ENCODE measurements at regions of chr4 and their contacts with region 1.

Region 1: GRCh38 chr4:186725469-186726425 is 2.1 kb upstream of the FAT1 start:
- DNase-seq: peak; percentile 78 to 93
- ATAC-seq: peak; percentile 90
- H3K4me3 ChIP-seq: peak overlapping the region; percentile 38 to 90
- H3K27ac ChIP-seq: peak overlapping the region; percentile 54 to 97
- H3K4me1 ChIP-seq: no peaks in the 10 kb centered on the region
- H3K27me3 ChIP-seq: no peaks in the 10 kb centered on the region

Region 2: DNA sequence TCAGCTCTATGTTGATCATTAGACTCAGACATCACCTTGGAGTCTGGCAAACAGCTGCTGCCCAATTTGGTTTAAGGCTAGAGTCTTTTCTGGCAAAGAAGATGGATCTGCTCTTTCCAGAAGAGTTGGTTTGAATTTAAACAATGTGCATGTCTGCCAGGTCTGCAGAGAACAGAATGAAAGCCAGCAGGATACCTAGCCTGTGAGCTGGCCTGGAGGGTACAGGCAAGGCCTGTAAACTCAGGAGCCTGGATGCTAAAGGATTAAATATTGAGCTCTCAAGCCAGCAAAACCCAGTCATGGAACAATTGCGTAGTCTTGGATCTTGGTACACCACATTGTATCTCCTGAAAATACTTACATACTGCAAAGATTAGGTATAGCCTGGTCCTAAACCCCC is 1174.8 kb before region 1 on chr4:
- intact Hi-C with region 1: no loop called
- DNase-seq: no peak
- ATAC-seq: no peak
- H3K4me3 ChIP-seq: no peak overlapping the region
- H3K27ac ChIP-seq: peak overlapping the region in 1 of 2 donors; percentile 3
- H3K4me1 ChIP-seq: peaks cover 0 to 3% of the 10 kb centered on the region in 2 donors
- H3K27me3 ChIP-seq: no peaks in the 10 kb centered on the region

Region 3: GRCh38 chr4:186669159-186669731 is 56.5 kb before region 1 on chr4:
- intact Hi-C with region 1: loop called in 1 of 2 experiments (anchors 1 kb)
- DNase-seq: no peak
- ATAC-seq: peak; percentile 79
- H3K4me3 ChIP-seq: peak overlapping the region in 1 of 2 donors; percentile 43
- H3K27ac ChIP-seq: no peak overlapping the region
- H3K4me1 ChIP-seq: no peaks in the 10 kb centered on the region
- H3K27me3 ChIP-seq: no peaks in the 10 kb centered on the region

Region 4: DNA sequence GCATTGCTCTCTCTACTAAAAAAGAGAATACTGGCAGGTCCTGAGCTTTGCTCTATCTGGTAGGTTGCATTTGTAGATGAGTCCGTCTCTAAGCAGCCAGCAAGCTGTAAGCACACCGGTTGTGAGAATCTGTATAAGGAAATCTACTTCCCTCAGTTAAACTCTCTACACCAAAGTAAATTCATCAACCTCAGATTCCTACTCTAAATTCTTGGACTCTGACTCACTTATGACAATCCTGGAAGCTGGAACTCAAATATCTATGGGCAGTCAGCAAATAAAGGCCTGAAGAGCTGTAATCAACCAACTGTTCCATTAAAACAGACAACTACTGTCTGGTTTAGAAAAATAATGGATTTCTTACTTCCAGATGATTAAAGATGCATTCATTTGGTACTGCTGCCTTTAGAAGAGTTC is 40.0 kb before region 1 on chr4:
- intact Hi-C with region 1: loop called in 1 of 2 experiments (anchors 5 kb)
- DNase-seq: no peak
- ATAC-seq: no peak
- H3K4me3 ChIP-seq: no peak overlapping the region
- H3K27ac ChIP-seq: no peak overlapping the region
- H3K4me1 ChIP-seq: peaks cover 3 to 6% of the 10 kb centered on the region in 2 donors
- H3K27me3 ChIP-seq: no peaks in the 10 kb centered on the region

Region 5: DNA sequence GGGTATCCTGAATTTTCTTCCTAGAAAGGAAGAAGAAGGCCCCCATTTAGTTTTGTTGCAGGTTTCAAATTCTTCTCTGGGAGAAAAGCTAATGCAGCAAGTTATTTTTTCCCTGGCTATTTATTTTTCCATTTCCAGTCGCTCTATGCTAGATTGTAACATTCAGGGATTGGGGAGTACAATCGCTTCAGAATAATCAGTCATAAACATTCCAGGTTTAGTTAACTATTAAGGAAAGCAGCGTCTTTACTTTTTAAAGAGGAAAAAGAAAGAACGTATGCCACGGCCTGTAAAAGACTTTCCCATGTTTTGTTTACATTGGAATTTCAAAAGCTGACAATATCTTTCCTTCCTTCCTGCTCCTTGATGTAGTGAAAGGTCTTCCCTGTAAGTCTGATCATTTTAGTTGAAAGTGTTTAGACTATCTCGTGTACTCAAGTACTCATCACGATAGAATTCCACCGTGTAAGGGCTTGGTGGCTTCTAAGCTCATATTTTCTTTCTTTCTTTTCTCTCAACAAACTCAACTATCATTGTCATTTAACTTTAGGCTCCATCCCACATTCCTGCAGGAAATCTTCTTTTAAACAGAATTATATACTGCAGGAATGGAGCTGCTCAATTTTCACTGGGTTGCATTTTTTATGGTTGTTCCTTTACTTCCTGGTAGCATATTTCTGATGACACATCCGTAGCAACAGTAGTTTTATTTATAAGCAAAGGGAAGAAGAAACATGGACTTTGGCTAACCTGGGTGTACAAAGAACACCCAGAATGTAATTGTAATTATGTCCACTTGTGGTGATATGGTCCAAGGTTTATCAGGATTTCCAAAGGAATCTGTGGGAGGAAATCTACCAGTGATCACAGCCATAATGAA is 211.0 kb after region 1 on chr4:
- intact Hi-C with region 1: loop called (anchors 10 kb)
- DNase-seq: no peak
- ATAC-seq: no peak
- H3K4me3 ChIP-seq: peak overlapping the region in 1 of 2 donors; percentile 57
- H3K27ac ChIP-seq: no peak overlapping the region
- H3K4me1 ChIP-seq: peaks cover 4 to 5% of the 10 kb centered on the region in 2 donors
- H3K27me3 ChIP-seq: no peaks in the 10 kb centered on the region

Region 6: DNA sequence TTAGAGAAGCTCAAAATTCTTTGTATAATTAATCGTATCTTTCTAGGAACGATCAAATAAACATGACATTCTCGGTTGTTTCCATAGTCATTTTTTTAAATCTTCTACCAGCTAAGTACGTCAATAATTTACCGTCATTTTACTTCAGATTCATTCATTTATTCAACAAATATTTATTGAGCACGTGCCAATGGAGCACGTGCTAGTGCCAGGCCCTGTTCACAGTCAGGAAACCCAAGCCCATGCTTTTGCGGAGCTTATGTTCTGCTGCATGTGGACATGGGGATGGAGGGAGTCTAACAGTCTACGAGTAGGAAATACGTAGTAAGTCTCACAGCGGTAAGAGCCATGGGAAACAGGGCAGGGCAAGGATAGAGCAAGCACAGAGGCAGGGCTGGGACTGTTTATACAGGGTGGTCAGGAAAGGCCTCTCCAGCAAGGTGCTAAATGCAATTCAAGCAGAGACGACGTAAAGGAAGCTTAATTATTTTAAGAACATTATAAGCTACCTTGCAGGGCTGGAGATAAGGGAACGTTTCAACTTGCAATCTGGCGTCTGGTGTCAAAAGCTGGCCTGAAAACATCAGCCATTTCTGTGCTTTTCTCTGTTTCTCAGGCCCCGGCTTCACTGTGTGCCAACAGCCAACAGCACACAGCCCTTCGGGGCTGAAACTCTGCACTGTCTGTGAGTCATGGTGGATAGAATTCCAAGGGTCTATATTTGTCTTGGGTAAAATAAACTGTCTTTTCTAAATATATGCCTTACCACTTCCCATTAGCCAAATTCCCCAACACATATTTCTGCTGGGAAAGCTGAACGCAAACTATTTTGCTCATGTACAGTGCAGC is 752.8 kb after region 1 on chr4:
- intact Hi-C with region 1: loop called (anchors 10 kb)
- DNase-seq: peak in 1 of 2 donors; percentile 76
- ATAC-seq: peak; percentile 87
- H3K4me3 ChIP-seq: no peak overlapping the region
- H3K27ac ChIP-seq: peak overlapping the region; percentile 87 to 98
- H3K4me1 ChIP-seq: peaks cover 5 to 21% of the 10 kb centered on the region in 2 donors
- H3K27me3 ChIP-seq: no peaks in the 10 kb centered on the region

Region 7: DNA sequence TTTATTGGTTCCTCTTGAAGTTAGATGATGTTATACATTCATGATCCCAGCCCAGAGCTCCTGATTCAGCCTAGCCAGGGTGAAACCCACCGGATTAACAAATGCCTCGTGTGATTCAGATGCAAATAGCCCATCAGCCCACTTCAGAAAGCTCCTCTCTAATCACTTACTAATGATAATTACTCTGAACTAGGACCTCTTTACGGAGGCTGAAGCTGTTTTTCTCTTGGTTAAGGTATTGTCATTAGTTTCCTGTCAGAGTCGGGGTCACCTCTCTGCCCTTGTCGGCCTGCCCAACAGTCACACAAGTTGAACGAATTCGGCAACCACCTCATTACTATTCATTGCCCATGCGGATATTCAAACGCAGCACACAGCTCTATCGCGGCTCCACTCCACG is 1306.4 kb after region 1 on chr4:
- intact Hi-C with region 1: loop called in 1 of 2 experiments (anchors 10 kb)
- DNase-seq: no peak
- ATAC-seq: no peak
- H3K4me3 ChIP-seq: no peak overlapping the region
- H3K27ac ChIP-seq: no peak overlapping the region
- H3K4me1 ChIP-seq: no peaks in the 10 kb centered on the region
- H3K27me3 ChIP-seq: no peaks in the 10 kb centered on the region